Dendritic cell treated with granulocyte-macrophage colony-stimulating factor and Interleukin-4, amounts not matched to agents 40 ng/mL and 50 ng/mL, for 4 days (primary cell): ENCODE measurements at regions of chr2 and their contacts with region 1.

Region 1: DNA sequence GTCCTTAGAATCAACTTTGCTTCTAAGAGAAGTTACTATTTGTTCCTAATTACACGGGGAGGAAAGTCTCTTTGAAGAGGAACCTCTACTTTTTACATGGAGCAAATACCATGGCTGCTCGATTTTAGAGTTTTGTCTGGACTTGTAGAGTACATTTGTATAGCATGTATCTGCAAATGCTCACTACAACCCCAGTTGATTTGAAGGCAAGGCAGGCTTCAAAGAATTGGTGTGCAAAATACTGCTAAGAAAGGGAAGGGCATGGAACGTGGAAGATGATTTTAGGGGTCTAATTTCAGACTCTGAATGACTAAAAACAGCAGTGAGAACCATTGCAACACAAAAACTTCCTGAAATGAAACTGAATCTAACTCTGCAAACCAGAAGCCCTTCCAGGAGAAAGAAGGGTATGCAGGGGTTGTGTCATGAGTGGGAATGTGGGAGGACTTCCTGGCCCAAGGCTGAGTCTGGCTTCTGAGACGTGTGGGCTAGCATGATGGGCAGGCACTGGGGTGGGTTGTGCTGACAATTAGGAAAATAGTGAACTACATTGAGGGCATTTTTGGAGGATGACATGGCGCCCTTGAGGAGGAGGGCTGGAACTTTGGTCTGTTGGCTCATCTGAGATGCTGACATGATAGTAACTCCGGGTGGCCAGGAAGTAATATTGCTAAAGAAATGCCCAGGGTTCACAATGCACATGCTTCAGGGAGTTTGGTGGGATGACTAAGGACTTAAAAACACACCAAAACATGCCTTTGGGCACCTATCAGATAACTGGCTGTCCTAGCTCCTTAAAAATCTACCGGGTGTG is 18.9 kb upstream of the IL1R2 start:
- H3K4me3 Mint-ChIP-seq: peak overlapping the region; percentile 51
- H3K27ac Mint-ChIP-seq: peak overlapping the region; percentile 86
- H3K4me1 Mint-ChIP-seq: peaks cover 78% of the 10 kb centered on the region
- H3K27me3 Mint-ChIP-seq: no peaks in the 10 kb centered on the region

Region 2: GRCh38 chr2:101991721-101992145 is 18.9 kb after region 1 on chr2 and contains the start of gene IL1R2:
- intact Hi-C with region 1: loop called (anchors 2 kb)
- H3K4me3 Mint-ChIP-seq: peak within 1 kb of the TSS; percentile 83
- H3K27ac Mint-ChIP-seq: peak within 1 kb of the TSS; percentile 86
- H3K4me1 Mint-ChIP-seq: peaks cover 86% of the 10 kb centered on the region
- H3K27me3 Mint-ChIP-seq: peaks cover 8% of the 10 kb centered on the region

Region 3: DNA sequence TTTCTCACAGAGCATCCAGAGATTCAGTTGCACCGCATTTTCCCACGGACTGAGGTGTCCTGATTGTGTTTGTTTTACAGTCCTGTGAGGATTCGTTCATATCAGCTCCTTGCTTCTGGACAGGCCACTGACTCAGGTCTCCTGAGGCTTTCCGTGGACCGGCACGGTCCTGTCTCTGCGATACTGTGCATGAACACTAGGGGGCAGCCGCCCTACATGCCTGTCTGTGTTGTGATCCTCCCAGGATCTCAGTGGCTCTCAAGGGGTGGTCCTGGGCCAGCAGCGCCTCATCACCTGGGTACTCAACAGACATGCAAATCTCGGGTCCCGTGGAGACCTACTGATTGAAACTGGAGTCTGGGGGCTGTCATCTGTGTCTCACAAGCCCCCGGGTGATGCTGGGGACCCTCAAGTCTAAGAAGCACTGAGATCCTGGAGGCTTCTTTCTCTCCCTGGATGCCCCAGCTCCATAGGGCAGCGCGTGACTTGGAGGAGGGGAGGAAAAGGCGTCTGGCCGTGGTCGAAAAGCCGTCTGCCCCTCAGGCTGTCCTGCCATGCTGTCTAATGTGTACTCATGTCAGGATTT is 47.9 kb after region 1 on chr2:
- intact Hi-C with region 1: no loop called
- H3K4me3 Mint-ChIP-seq: no peak overlapping the region
- H3K27ac Mint-ChIP-seq: peak overlapping the region; percentile 94
- H3K4me1 Mint-ChIP-seq: peaks cover 51% of the 10 kb centered on the region
- H3K27me3 Mint-ChIP-seq: no peaks in the 10 kb centered on the region